Heart right ventricle (tissue), 16 donors: ENCODE measurements at regions of chr18 and their contacts with region 1.

Region 1: DNA sequence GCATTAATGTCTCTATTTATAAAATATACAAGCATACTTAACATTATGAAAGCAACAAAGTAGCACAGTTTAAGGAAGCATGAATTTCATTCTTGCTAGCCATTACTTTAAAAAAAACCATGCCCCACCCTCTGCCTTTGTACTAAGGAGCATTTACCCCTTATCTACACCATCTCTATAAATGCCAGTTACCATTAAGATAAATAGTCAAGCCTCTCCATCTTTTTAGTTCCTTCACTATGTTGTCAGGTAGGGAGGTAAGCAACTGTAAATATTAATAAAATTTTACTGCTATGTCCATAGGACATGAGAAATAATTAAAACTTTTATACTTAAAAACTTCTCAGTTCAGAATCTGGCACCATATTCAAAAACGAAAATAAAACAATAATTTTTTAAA is 42.1 kb downstream of the ROCK1 start:
- DNase-seq: no peak
- ATAC-seq: no peak
- H3K4me3 ChIP-seq: no peak overlapping the region
- H3K27ac ChIP-seq: no peak overlapping the region
- H3K4me1 ChIP-seq: peaks cover 2 to 20% (median 14%) of the 10 kb centered on the region in 9 donors
- H3K27me3 ChIP-seq: no peaks in the 10 kb centered on the region
- CTCF ChIP-seq: no peak

Region 2: DNA sequence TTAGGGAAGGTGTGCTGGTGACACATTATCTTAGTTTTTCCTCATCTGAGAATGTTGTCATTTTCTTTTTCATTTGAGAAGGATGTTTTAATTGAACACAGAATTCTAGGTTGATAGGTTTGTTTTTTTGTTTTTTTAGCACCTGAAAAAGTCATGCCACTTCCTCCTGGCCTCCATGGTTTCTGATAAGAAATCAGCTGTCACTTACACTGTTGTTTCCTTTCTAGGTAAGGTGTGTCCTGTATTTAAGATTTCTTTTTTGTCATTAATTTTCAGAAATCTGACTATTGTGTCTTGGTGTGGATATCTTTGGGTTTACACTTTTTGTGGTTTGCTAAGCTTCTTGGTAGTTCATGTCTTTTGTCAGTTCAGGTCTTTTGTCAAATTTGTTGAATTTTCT is 57.2 kb before region 1 on chr18:
- intact Hi-C with region 1: no loop called
- DNase-seq: no peak
- ATAC-seq: no peak
- H3K4me3 ChIP-seq: no peak overlapping the region
- H3K27ac ChIP-seq: no peak overlapping the region
- H3K4me1 ChIP-seq: no peaks in the 10 kb centered on the region
- H3K27me3 ChIP-seq: no peaks in the 10 kb centered on the region
- CTCF ChIP-seq: no peak

Region 3: GRCh38 chr18:21031845-21032244 is 37.6 kb before region 1 on chr18:
- intact Hi-C with region 1: loop called in 1 of 10 experiments (anchors 5 kb)
- DNase-seq: no peak
- ATAC-seq: no peak
- H3K4me3 ChIP-seq: no peak overlapping the region
- H3K27ac ChIP-seq: no peak overlapping the region
- H3K4me1 ChIP-seq: peaks cover 0 to under 1% (median 0%) of the 10 kb centered on the region in 9 donors
- H3K27me3 ChIP-seq: no peaks in the 10 kb centered on the region
- CTCF ChIP-seq: no peak

Region 4: GRCh38 chr18:21163647-21164547 is 94.4 kb after region 1 on chr18:
- intact Hi-C with region 1: no loop called
- DNase-seq: peak in 1 of 2 donors; percentile 12
- ATAC-seq: peak; percentile 35 to 88 (median 74)
- H3K4me3 ChIP-seq: no peak overlapping the region
- H3K27ac ChIP-seq: peak overlapping the region in 4 of 10 donors; percentile 7 to 85 (median 38)
- H3K4me1 ChIP-seq: peaks cover 0 to 33% (median 0%) of the 10 kb centered on the region in 9 donors
- H3K27me3 ChIP-seq: no peaks in the 10 kb centered on the region
- CTCF ChIP-seq: no peak